ENCODE measurements at regions of chr18 and their contacts with region 1.

Region 1: DNA sequence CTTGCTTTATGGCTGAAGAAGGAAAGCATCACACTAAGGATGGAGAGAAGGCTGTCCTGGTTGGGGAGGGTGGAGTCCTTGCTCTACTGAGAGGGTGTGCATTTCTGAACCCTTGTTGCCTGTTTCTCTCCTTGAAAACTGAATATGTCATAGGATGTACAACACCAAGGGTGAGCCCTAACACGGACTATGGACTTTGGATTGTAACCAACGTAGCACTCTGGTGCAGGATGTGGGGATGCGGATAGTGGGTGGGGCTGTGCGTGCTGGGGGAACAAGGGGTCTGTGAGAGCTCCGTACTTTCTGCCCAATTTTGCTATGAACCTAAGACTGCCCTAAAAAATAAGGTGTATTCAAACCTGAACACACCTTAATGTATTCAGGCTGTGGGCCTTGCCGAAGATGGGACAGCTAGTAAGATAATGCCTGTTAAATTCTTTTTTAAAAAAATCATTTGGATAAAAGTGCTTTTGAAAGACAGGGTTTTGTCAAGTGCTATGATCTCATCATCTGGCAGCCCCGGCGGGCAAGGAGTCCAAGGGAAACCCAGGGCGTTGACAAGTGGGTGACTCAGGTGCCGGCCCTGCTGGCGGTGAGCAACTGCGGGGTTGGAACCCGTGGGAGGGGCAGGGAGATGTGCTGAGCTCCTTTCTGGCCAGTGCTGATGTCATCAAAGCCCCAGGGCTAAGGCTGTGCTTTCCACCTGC is 54.0 kb downstream of the GATA6 start:
- DNase-seq: peak; percentile 92 to 99 (median 98)
- H3K4me3 ChIP-seq: no peak overlapping the region
- H3K27ac ChIP-seq: peak overlapping the region in 3 of 5 donors; percentile 44 to 53 (median 45)
- H3K4me1 ChIP-seq: no peaks in the 10 kb centered on the region
- H3K27me3 ChIP-seq: no peaks in the 10 kb centered on the region
- CTCF ChIP-seq: no peak
- POLR2A ChIP-seq: no peak

Region 2: GRCh38 chr18:22279741-22280452 is 56.5 kb after region 1 on chr18:
- intact Hi-C with region 1: loop called in 1 of 2 experiments (anchors 10 kb)
- DNase-seq: no peak
- H3K4me3 ChIP-seq: no peak overlapping the region
- H3K27ac ChIP-seq: no peak overlapping the region
- H3K4me1 ChIP-seq: peaks cover 12 to 19% of the 10 kb centered on the region in 2 donors
- H3K27me3 ChIP-seq: no peaks in the 10 kb centered on the region
- CTCF ChIP-seq: no peak
- POLR2A ChIP-seq: no peak

Measured in adrenal gland (tissue), 19 donors.